ENCODE measurements at regions of chr14 and their contacts with region 1.

Region 1: DNA sequence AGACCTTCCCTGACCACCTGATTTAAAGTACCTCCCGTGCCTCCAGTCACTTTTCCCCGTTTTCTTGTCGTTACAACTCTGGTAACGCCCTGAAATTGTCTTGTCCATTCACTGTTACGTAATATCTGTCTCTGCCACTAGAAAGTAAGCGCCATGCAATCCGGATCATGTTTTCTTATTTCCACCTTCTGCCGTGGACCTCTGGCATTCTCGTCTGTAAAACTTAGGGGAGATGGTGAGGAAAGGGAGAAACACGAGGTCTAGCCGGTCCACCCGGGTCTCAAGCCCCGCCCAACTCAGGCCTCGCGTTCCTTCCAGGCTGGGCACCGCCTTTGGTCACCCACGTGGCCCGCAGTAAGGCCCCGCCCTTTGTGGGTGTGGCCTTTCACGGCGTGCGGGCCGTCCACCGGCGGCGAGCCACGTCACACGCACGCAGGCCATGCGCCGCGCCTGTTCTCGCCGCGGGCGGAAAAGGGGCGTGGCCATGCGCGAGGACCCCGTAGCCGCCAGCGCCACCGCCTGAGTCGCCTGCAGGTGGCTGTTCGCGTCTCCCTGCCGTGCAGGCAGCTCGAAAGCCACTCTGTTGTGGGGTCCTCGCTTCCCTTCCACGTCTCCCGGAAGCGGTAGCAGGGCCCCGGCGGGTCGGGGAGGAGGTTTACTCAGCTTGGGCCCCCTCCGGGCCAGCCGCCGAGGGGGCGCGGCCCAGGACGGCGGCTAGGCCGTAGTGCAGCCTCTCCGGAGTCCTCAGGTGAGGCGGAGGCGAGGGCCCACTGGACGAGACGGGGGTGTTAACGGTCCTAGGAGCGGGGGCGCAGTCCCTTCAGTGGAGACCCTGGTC is at the start of gene GOLGA5:
- DNase-seq: peak; percentile 98
- ATAC-seq: peak; percentile 98
- H3K4me3 Mint-ChIP-seq: peak within 1 kb of the TSS; percentile 99
- H3K27ac Mint-ChIP-seq: peak within 1 kb of the TSS; percentile 96
- H3K4me1 Mint-ChIP-seq: peaks cover 40% of the 10 kb centered on the region
- H3K27me3 Mint-ChIP-seq: no peaks in the 10 kb centered on the region
- total RNA-seq, gene GOLGA5: 20.3 to 23.5 TPM

Region 2: GRCh38 chr14:92106143-92106926 is 687.6 kb before region 1 on chr14 and contains the start of gene ATXN3:
- CTCF ChIA-PET with region 1: no interaction called
- POLR2A ChIA-PET with region 1: no interaction called
- intact Hi-C with region 1: loop called in 1 of 2 experiments (anchors 1 kb)
- DNase-seq: peak; percentile 98
- ATAC-seq: peak; percentile 97
- H3K4me3 Mint-ChIP-seq: peak within 1 kb of the TSS; percentile 90
- H3K27ac Mint-ChIP-seq: peak within 1 kb of the TSS; percentile 92
- H3K4me1 Mint-ChIP-seq: peaks cover 42% of the 10 kb centered on the region
- H3K27me3 Mint-ChIP-seq: no peaks in the 10 kb centered on the region
- total RNA-seq, gene ATXN3: 32.7 to 36.0 TPM

Region 3: GRCh38 chr14:92563359-92563758 is 230.6 kb before region 1 on chr14:
- CTCF ChIA-PET with region 1: no interaction called
- POLR2A ChIA-PET with region 1: no interaction called
- intact Hi-C with region 1: loop called in 1 of 2 experiments (anchors 10 kb)
- DNase-seq: peak; percentile 41
- ATAC-seq: peak; percentile 87
- H3K4me3 Mint-ChIP-seq: no peak overlapping the region
- H3K27ac Mint-ChIP-seq: no peak overlapping the region
- H3K4me1 Mint-ChIP-seq: peaks cover 34% of the 10 kb centered on the region
- H3K27me3 Mint-ChIP-seq: no peaks in the 10 kb centered on the region

Region 4: DNA sequence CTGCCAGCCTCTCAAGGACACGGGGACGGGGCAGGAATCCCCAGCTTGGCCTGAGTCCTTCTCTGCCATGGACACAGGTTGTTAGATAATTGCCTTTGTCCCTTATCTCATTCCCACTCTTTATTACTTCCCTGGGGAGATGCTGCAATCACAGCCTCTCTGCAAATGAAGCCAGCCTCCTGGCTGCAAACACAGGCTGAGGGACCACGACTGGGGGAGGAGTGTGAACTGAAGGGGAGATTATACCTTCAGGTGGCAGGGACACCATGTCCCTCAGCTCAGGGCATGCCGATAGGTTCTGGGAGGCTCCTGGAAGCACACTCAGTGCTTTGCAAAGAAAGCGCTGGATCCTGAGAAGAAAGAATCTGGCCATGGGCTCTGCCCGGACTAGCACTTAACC is 112.9 kb after region 1 on chr14:
- CTCF ChIA-PET with region 1: no interaction called
- POLR2A ChIA-PET with region 1: no interaction called
- intact Hi-C with region 1: no loop called
- DNase-seq: no peak
- ATAC-seq: no peak
- H3K4me3 Mint-ChIP-seq: no peak overlapping the region
- H3K27ac Mint-ChIP-seq: no peak overlapping the region
- H3K4me1 Mint-ChIP-seq: peaks cover 15% of the 10 kb centered on the region
- H3K27me3 Mint-ChIP-seq: peaks cover 15% of the 10 kb centered on the region

Region 5: DNA sequence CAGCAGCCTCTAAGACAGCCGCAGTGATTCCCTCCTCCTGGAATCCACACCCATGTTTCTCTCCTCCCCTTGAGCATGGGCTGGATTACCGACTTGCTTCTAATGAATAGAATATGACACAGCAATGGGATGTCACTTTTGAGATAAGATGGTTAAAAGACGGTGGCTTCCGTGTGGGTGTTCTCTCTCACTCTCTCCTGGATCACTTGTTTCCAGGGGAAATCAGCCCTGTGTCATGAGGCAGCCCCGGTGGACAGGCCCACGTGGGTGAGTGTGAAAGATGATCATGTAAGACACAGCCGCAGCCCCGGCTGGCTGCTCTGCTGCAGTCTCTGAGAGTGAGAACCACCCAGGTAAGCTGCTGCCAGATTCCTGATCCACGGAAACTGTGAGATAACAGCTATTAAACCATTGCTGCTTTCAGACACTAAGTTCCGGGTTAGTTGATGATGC is 380.0 kb after region 1 on chr14:
- CTCF ChIA-PET with region 1: no interaction called
- POLR2A ChIA-PET with region 1: no interaction called
- intact Hi-C with region 1: no loop called
- DNase-seq: no peak
- ATAC-seq: peak; percentile 30
- H3K4me3 Mint-ChIP-seq: no peak overlapping the region
- H3K27ac Mint-ChIP-seq: no peak overlapping the region
- H3K4me1 Mint-ChIP-seq: no peaks in the 10 kb centered on the region
- H3K27me3 Mint-ChIP-seq: no peaks in the 10 kb centered on the region

Region 6: DNA sequence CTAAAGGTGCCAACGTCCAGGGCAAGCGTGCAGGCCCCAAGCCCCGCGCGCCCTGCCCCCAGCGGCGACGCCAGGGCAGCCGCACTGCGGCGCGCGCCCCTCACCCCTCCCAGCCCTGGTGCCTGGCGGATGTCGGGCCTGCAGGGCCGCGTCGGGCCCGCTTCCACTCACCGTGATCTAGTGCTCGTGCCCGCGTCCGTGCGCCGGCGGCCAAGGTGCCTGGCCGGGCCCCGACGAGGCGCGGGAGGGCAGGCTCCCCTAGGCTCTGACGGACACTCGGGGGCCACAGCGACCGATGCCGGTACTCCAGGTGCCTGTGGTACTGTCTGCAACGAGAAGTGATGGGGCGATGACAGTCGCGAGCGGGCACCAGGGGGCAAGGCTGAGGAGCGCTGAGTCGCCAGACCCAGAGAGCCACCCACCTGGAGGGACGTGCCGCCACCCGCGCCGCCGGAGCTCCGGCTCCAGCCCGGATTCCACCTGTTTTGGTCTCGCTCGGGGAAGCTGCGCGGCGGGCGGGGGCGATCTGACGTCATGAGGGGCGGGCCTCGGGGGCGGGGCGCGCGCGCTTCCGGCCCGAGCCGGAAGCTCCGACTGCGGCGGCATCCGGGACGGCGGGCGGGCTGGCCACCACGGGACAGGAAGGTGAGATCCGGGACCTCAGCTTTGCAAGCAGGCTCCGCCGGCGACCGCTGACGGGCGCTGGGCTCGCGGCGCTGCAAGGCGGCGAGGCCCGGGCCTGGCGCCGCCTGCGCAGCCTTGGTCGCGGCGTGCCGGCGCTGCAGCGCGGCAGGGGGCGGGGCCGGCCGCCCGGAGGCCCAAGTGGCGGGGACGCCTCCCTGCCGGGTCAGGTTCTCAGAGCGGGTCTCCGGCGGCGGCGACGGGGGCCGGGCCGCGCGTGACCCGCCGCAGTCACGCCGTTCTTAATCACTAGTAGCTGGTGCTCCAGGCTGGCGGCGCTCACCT is 390.7 kb after region 1 on chr14 and contains the starts of genes LYSET and MOAP1:
- CTCF ChIA-PET with region 1: no interaction called
- POLR2A ChIA-PET with region 1: no interaction called
- intact Hi-C with region 1: loop called in 1 of 2 experiments (anchors 1 kb)
- DNase-seq: peak; percentile 95
- ATAC-seq: peak; percentile 90
- H3K4me3 Mint-ChIP-seq: peak within 1 kb of the TSS; percentile 91
- H3K27ac Mint-ChIP-seq: peak within 1 kb of the TSS; percentile 93
- H3K4me1 Mint-ChIP-seq: peaks cover 40% of the 10 kb centered on the region
- H3K27me3 Mint-ChIP-seq: no peaks in the 10 kb centered on the region
- total RNA-seq, gene LYSET: 9.9 to 10.2 TPM
- total RNA-seq, gene MOAP1: 11.7 to 15.9 TPM

Region 7: DNA sequence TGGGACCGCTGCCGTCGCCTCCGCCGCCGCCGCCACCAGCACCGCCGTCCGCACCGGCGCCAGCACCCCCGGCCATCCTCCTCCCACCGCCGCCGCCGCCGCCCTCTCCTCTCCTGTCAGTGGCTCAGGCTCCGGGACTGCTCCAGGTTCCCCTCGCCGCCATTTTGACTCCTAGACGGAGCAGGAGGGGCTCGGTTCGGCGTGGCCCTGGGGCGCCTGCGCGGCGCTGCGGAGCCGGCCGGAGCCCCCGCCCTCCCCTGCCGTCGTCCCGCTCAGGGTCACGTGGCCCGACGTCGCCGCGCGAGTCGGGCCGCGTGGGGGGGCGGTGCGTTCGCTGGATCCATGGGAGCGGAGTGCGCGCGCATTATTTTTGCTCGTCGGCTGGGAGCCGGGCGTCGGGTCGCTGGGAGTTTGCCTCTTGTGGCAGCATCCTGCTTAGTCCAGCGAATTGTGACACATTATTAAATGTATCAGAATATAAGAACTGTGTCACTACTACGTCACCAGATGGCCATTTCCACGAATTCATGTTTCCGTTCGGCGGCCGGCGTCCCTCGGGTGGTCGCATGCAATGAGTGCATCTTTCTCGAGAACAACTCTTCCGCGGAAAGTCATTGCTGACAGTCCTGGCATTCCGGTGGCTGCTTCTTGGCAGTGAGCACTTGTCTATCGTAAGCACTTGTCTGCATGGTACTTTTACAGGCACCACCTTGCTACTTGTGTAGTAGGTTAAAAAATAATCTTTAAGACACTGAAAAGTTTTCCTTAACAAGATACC is 539.1 kb after region 1 on chr14 and contains the start of gene BTBD7:
- CTCF ChIA-PET with region 1: no interaction called
- POLR2A ChIA-PET with region 1: no interaction called
- intact Hi-C with region 1: loop called in 1 of 2 experiments (anchors 2 kb)
- DNase-seq: peak; percentile 97
- ATAC-seq: peak; percentile 94
- H3K4me3 Mint-ChIP-seq: peak within 1 kb of the TSS; percentile 90
- H3K27ac Mint-ChIP-seq: peak within 1 kb of the TSS; percentile 88
- H3K4me1 Mint-ChIP-seq: peaks cover 46% of the 10 kb centered on the region
- H3K27me3 Mint-ChIP-seq: no peaks in the 10 kb centered on the region
- total RNA-seq, gene BTBD7: 6.5 to 9.5 TPM

Measured in activated CD4-positive, alpha-beta T cell treated with anti-CD3 and anti-CD28 coated beads for 36 hours (primary cell).